ENCODE measurements at regions of chr1 and their contacts with region 1.

Region 1: GRCh38 chr1:109277434-109278204 is 5.3 kb downstream of the PSRC1 start:
- DNase-seq: no peak
- ATAC-seq: peak; percentile 80
- H3K4me3 ChIP-seq: no peak overlapping the region
- H3K27ac ChIP-seq: peak overlapping the region; percentile 23
- H3K4me1 ChIP-seq: peaks cover 30% of the 10 kb centered on the region
- H3K27me3 ChIP-seq: no peaks in the 10 kb centered on the region
- CTCF ChIP-seq: peak; percentile 85

Region 2: DNA sequence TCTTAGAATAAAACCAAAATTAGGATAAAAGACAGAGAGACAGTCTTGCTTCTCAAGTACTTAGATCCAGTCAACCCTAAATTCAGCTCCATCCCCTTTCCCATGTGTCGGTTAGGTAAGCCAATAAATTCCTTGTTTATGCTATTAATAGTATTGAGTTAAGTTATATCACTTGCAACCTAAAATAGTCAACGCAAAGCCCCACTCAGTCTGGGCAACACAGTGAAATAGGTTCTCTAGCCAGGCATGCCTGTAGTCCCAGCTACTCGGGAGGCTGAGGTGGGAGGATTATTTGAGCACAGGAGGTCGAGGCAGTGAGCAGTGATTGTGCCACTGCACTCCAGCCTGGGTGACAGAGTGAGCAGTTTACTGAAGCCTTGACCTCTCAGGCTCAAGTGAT is 216.4 kb before region 1 on chr1:
- CTCF ChIA-PET with region 1: no interaction called
- POLR2A ChIA-PET with region 1: interaction called, 14 read pairs
- in situ Hi-C with region 1: no loop called
- intact Hi-C with region 1: no loop called
- DNase-seq: no peak
- ATAC-seq: no peak
- H3K4me3 ChIP-seq: no peak overlapping the region
- H3K27ac ChIP-seq: no peak overlapping the region
- H3K4me1 ChIP-seq: no peaks in the 10 kb centered on the region
- H3K27me3 ChIP-seq: no peaks in the 10 kb centered on the region
- CTCF ChIP-seq: no peak